K562 (cell line): ENCODE measurements at regions of chrX and their contacts with region 1.

Region 1: GRCh38 chrX:131633285-131633917 is 89.5 kb downstream of the OR13H1 start:
- DNase-seq: peak; percentile 44 to 70 (median 53)
- ATAC-seq: peak; percentile 98
- H3K4me3 ChIP-seq: no peak overlapping the region
- H3K27ac ChIP-seq: no peak overlapping the region
- H3K4me1 ChIP-seq: no peaks in the 10 kb centered on the region
- H3K27me3 ChIP-seq: no peaks in the 10 kb centered on the region; a peak in 2 of 5 replicates
- CTCF ChIP-seq: peak; percentile 75 to 78 (median 77)
- EP300 ChIP-seq: no peak
- POLR2A ChIP-seq: no peak
- RAD21 ChIP-seq: peak; percentile 76 to 86

Region 2: DNA sequence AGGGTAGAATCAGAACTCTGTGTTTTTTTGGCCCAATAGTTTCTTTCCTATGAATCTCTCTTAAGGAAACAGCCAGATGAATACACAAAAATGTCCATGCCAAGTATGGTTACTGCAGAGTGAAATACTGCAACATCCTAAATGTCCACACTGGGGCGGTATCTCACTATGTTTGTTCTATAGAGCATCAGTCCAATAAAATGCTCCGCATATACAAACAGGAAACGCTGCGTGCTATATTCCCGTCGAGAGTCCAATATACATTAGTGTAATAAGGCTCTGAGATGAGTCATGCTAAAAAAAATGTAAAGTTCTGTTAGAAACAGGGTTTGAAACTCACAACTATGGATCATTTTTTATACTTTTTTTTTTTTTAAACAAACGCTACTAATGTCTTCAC is 657.5 kb before region 1 on chrX:
- CTCF ChIA-PET with region 1: interaction called, 13 read pairs
- POLR2A ChIA-PET with region 1: no interaction called
- in situ Hi-C with region 1: no loop called
- intact Hi-C with region 1: loop called (anchors 2 kb)
- DNase-seq: peak; percentile 37 to 69 (median 44)
- ATAC-seq: peak; percentile 97
- H3K4me3 ChIP-seq: no peak overlapping the region
- H3K27ac ChIP-seq: no peak overlapping the region
- H3K4me1 ChIP-seq: no peaks in the 10 kb centered on the region; a peak in 1 of 5 replicates
- H3K27me3 ChIP-seq: no peaks in the 10 kb centered on the region
- CTCF ChIP-seq: peak; percentile 50 to 74 (median 65); a peak in 5 of 6 replicates
- EP300 ChIP-seq: no peak
- POLR2A ChIP-seq: no peak
- RAD21 ChIP-seq: peak; percentile 77 to 84

Region 3: GRCh38 chrX:130994671-130995070 is 638.7 kb before region 1 on chrX:
- CTCF ChIA-PET with region 1: no interaction called
- POLR2A ChIA-PET with region 1: no interaction called
- in situ Hi-C with region 1: no loop called
- intact Hi-C with region 1: loop called (anchors 1 kb)
- DNase-seq: peak; percentile 24 to 42 (median 26)
- ATAC-seq: peak; percentile 59; the same call in 2 of the 3 replicates
- H3K4me3 ChIP-seq: no peak overlapping the region
- H3K27ac ChIP-seq: no peak overlapping the region
- H3K4me1 ChIP-seq: peaks cover 0 to 7% of the 10 kb centered on the region in 2 experiments; a peak in 2 of 5 replicates
- H3K27me3 ChIP-seq: peaks cover 0 to 4% of the 10 kb centered on the region in 2 experiments; a peak in 1 of 5 replicates
- CTCF ChIP-seq: peak; percentile 36 to 66 (median 64); a peak in 5 of 6 replicates
- EP300 ChIP-seq: no peak
- POLR2A ChIP-seq: no peak
- RAD21 ChIP-seq: peak; percentile 34 to 59

Region 4: GRCh38 chrX:131068945-131069719 is 564.3 kb before region 1 on chrX:
- CTCF ChIA-PET with region 1: interaction called, 8 read pairs
- POLR2A ChIA-PET with region 1: no interaction called
- in situ Hi-C with region 1: no loop called
- intact Hi-C with region 1: loop called (anchors 2 kb)
- DNase-seq: peak; percentile 49 to 61 (median 54)
- ATAC-seq: peak; percentile 98
- H3K4me3 ChIP-seq: no peak overlapping the region
- H3K27ac ChIP-seq: no peak overlapping the region
- H3K4me1 ChIP-seq: no peaks in the 10 kb centered on the region; a peak in 1 of 5 replicates
- H3K27me3 ChIP-seq: peaks cover 0 to 36% of the 10 kb centered on the region in 2 experiments; a peak in 3 of 5 replicates
- CTCF ChIP-seq: peak; percentile 54 to 80 (median 61)
- EP300 ChIP-seq: no peak
- POLR2A ChIP-seq: no peak
- RAD21 ChIP-seq: peak; percentile 49 to 61

Region 5: GRCh38 chrX:131366407-131366806 is 267.0 kb before region 1 on chrX:
- CTCF ChIA-PET with region 1: no interaction called
- POLR2A ChIA-PET with region 1: no interaction called
- in situ Hi-C with region 1: no loop called
- intact Hi-C with region 1: loop called (anchors 5 kb)
- DNase-seq: peak in 2 of 4 experiments; percentile 8 to 9
- ATAC-seq: 0 out of 3 replicates have a peak, but pooled peaks have one; percentile 61
- H3K4me3 ChIP-seq: no peak overlapping the region
- H3K27ac ChIP-seq: no peak overlapping the region
- H3K4me1 ChIP-seq: no peaks in the 10 kb centered on the region
- H3K27me3 ChIP-seq: no peaks in the 10 kb centered on the region
- CTCF ChIP-seq: peak in 1 of 3 experiments; percentile 46; a peak in 3 of 6 replicates
- EP300 ChIP-seq: no peak
- POLR2A ChIP-seq: no peak
- RAD21 ChIP-seq: peak; percentile 48 to 67

Region 6: DNA sequence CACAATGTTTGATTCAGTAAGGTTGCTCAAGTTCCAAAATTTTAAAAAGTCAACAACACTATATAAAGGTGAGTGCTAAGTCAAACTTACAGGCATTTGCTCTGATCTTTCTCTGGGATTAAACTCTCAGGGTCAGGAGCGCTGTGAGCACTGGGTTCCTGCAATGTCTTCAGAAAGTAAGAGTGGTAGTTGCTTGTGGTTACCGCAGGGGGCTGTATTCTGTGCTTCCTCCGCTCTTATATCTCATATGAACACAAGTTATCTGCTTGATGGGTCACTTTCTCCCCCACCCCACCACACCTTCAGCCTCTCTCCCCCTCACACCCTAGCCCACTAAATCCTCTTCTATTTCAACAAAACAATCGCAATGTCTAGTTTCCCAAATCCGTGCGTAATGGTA is 227.9 kb before region 1 on chrX:
- CTCF ChIA-PET with region 1: no interaction called
- POLR2A ChIA-PET with region 1: no interaction called
- in situ Hi-C with region 1: no loop called
- intact Hi-C with region 1: loop called (anchors 10 kb)
- DNase-seq: peak in 2 of 4 experiments; percentile 16 to 19
- ATAC-seq: peak; percentile 93
- H3K4me3 ChIP-seq: no peak overlapping the region
- H3K27ac ChIP-seq: no peak overlapping the region
- H3K4me1 ChIP-seq: no peaks in the 10 kb centered on the region; a peak in 1 of 5 replicates
- H3K27me3 ChIP-seq: no peaks in the 10 kb centered on the region
- CTCF ChIP-seq: peak; percentile 6 to 39 (median 38); a peak in 2 of 6 replicates
- EP300 ChIP-seq: no peak
- POLR2A ChIP-seq: no peak
- RAD21 ChIP-seq: no peak

Region 7: GRCh38 chrX:131617182-131617581 is 16.2 kb before region 1 on chrX:
- CTCF ChIA-PET with region 1: no interaction called
- POLR2A ChIA-PET with region 1: no interaction called
- in situ Hi-C with region 1: no loop called
- intact Hi-C with region 1: no loop called
- DNase-seq: no peak
- ATAC-seq: no peak
- H3K4me3 ChIP-seq: no peak overlapping the region
- H3K27ac ChIP-seq: no peak overlapping the region
- H3K4me1 ChIP-seq: no peaks in the 10 kb centered on the region
- H3K27me3 ChIP-seq: no peaks in the 10 kb centered on the region; a peak in 1 of 5 replicates
- CTCF ChIP-seq: no peak
- EP300 ChIP-seq: no peak
- POLR2A ChIP-seq: no peak
- RAD21 ChIP-seq: no peak